ENCODE measurements at regions of chr1 and their contacts with region 1.

Region 1: GRCh38 chr1:198681831-198682759 is 43.3 kb downstream of the PTPRC start:
- DNase-seq: peak; percentile 86
- H3K4me3 Mint-ChIP-seq: peak overlapping the region; percentile 61
- H3K27ac Mint-ChIP-seq: peak overlapping the region; percentile 99
- H3K4me1 Mint-ChIP-seq: peaks cover 86% of the 10 kb centered on the region
- H3K27me3 Mint-ChIP-seq: no peaks in the 10 kb centered on the region

Region 2: DNA sequence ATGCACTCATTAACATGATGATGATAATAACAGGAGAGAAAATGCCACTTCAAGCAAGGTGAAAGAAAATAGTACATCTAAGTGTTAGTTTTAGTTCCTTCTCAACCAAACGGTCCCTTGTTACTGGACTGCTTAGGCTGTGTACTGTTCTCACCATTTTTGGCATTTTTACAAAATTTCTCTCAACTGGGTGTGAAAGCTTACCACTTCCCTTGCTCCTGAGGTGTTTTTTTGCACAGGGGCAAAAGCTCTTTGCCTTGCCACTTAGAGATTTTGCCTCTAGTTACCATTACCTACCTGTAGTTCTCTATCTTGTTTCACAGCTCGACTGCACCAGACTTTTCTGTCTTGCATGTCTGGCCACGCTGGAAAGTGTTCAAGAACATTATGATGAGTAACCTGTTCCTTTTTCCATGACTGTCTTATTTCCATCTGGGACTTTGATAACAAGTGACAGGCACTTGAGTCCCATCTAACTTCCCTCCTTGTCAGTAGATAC is 514.6 kb before region 1 on chr1:
- CTCF ChIA-PET with region 1: no interaction called
- intact Hi-C with region 1: loop called (anchors 2 kb)
- DNase-seq: peak; percentile 44
- H3K4me3 Mint-ChIP-seq: peak overlapping the region; percentile 55
- H3K27ac Mint-ChIP-seq: peak overlapping the region; percentile 93
- H3K4me1 Mint-ChIP-seq: peaks cover 90% of the 10 kb centered on the region
- H3K27me3 Mint-ChIP-seq: no peaks in the 10 kb centered on the region

Region 3: DNA sequence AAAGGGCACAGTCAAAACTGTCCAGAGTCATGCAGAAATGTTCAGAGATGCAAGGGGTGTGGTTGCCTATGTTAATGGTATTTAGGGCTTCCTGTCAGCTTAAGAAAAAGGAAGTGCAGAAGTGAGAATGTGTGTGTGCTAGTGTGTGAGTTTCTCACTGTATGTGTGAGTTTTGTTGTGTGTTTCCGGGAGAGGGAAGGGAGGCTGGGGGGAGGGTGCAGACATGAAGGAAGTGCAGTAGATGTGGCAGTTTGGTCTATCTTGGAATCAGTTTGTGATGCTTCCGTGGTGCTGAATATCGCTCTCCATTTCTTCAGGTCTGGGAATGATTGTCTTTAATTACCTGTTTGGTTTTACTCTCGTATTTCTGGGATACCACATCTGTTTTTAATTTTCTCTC is 125.1 kb before region 1 on chr1:
- CTCF ChIA-PET with region 1: no interaction called
- intact Hi-C with region 1: loop called (anchors 1 kb)
- DNase-seq: peak; percentile 85
- H3K4me3 Mint-ChIP-seq: peak overlapping the region; percentile 73
- H3K27ac Mint-ChIP-seq: peak overlapping the region; percentile 85
- H3K4me1 Mint-ChIP-seq: peaks cover 81% of the 10 kb centered on the region
- H3K27me3 Mint-ChIP-seq: no peaks in the 10 kb centered on the region

Region 4: GRCh38 chr1:198620951-198621824 is 60.9 kb before region 1 on chr1:
- CTCF ChIA-PET with region 1: interaction called, 10 read pairs
- intact Hi-C with region 1: no loop called
- DNase-seq: peak; percentile 77
- H3K4me3 Mint-ChIP-seq: peak overlapping the region; percentile 82
- H3K27ac Mint-ChIP-seq: peak overlapping the region; percentile 100
- H3K4me1 Mint-ChIP-seq: peaks cover 86% of the 10 kb centered on the region
- H3K27me3 Mint-ChIP-seq: no peaks in the 10 kb centered on the region

Region 5: GRCh38 chr1:198657550-198658064 is 24.5 kb before region 1 on chr1:
- CTCF ChIA-PET with region 1: interaction called, 3 read pairs
- intact Hi-C with region 1: loop called (anchors 1 kb)
- DNase-seq: peak; percentile 38
- H3K4me3 Mint-ChIP-seq: peak overlapping the region; percentile 61
- H3K27ac Mint-ChIP-seq: peak overlapping the region; percentile 100
- H3K4me1 Mint-ChIP-seq: peaks cover 60% of the 10 kb centered on the region
- H3K27me3 Mint-ChIP-seq: no peaks in the 10 kb centered on the region

Region 6: DNA sequence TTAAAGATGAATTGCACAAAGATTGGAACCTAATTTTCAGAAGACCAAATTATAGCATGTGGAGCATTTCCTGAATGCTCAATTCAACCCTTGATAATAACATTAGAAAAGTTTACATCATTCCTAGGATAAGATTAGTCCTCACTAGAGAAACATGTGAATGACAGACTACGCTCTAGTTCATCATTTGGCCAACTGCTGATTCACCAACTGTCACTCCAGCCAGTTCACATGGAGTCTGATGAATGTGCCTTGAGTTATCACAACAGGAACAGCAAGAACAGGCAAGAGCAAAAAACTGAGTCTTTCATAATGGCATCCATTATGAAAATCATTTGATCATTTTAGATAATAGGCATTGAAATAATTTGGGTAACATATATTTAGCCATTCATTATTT is 372.6 kb after region 1 on chr1:
- CTCF ChIA-PET with region 1: no interaction called
- intact Hi-C with region 1: no loop called
- DNase-seq: no peak
- H3K4me3 Mint-ChIP-seq: no peak overlapping the region
- H3K27ac Mint-ChIP-seq: no peak overlapping the region
- H3K4me1 Mint-ChIP-seq: no peaks in the 10 kb centered on the region
- H3K27me3 Mint-ChIP-seq: no peaks in the 10 kb centered on the region

Measured in activated naive CD4-positive, alpha-beta T cell treated with anti-CD3 and anti-CD28 coated beads for 36 hours (primary cell).